ENCODE measurements at regions of chr12 and their contacts with region 1.

Region 1: DNA sequence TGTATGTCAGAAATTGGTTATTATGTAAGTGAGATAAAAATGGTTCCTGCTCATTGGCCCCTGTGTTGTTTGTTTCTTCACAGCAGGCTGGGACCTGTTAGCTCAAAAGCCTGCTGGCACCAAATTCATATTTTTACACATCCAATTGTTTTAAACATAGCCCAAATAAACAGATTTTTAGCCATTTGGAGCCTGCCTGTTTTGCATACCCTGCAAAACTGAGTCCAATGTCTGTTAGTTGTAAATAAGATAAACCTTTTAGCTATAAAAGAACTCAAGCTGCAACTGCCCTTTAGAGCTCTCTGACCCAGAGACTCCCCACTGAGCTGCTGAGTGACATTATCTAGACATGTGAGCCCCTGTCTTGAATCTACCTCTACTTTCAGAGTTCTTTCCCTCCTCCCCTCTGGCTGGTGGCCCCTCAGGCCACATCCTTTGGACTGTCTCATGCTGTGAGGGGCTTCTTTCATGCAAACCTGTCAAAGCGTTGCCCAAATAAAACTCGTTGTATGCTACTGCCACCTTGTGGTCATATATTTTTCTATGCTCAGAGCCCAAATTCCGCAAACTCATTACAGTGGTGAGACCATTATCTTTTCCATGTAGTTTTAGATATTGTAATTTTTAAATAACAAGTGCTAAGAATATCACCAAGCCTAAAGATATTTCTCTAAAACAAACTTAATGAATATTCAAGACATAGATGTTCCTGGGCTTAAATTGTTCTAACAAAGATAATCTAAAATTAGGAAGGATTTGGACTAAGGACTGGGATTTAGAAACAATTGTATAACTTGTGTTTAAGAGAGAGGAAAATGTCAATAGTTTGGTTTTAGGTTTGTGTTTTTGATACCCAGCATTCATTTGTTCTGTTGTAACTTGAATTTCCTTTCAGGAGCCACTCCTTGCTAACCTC is 337.9 kb downstream of the AACS start:
- DNase-seq: no peak
- H3K4me3 ChIP-seq: no peak overlapping the region
- H3K27ac ChIP-seq: no peak overlapping the region
- H3K4me1 ChIP-seq: no peaks in the 10 kb centered on the region
- H3K27me3 ChIP-seq: peaks cover 0 to 40% (median 0%) of the 10 kb centered on the region in 7 donors
- CTCF ChIP-seq: peak in 9 of 11 experiments; percentile 8 to 54 (median 46)
- POLR2A ChIP-seq: no peak

Region 2: DNA sequence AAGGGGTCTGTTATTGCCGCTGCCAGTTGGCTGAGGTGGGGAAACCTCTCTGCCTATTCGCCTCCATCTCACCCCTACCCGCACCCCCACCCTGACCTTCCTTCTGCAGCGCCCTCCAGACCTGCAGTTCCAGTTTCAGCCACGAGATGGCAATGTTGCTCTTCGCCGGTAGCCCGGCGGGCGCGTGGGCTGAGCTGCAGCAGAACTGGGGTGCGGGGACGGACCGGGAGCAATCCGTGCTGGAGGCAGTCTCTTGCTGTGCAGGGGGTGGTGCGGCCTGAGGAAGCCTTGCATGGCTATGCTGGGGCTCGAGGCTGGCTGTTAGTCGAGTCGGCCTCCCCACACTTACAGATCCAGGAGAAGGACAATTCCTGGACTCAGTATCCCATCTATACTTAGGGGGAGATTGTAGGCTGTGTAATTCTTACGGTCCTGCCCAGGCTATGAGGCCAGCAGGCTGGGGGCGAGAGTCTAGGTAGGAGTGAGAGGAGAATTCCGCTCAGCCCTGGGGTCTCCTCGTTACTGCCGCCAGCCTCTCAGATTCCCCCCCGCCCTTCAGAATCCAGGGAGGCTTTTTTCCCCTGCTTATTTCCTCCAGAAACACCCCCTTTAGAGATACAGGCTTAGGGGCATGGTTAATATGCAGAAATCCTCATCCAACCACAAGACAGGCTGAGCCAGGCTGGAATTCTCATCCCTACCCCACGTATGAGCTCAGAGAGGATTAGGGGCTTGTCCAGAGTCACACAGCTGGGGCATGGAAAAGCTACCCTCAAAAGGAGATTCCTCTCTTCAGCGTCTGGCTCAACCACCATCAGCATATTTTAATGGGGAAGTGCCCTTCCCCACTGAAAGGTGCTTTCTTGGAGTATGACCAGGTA is 219.7 kb before region 1 on chr12:
- intact Hi-C with region 1: loop called (anchors 10 kb)
- DNase-seq: peak; percentile 92
- H3K4me3 ChIP-seq: peak overlapping the region in 1 of 8 donors; percentile 36
- H3K27ac ChIP-seq: no peak overlapping the region
- H3K4me1 ChIP-seq: peaks cover 13 to 38% (median 27%) of the 10 kb centered on the region in 6 donors
- H3K27me3 ChIP-seq: peaks cover 3 to 95% (median 47%) of the 10 kb centered on the region in 7 donors
- CTCF ChIP-seq: peak; percentile 96 to 99 (median 98)
- POLR2A ChIP-seq: no peak

Region 3: DNA sequence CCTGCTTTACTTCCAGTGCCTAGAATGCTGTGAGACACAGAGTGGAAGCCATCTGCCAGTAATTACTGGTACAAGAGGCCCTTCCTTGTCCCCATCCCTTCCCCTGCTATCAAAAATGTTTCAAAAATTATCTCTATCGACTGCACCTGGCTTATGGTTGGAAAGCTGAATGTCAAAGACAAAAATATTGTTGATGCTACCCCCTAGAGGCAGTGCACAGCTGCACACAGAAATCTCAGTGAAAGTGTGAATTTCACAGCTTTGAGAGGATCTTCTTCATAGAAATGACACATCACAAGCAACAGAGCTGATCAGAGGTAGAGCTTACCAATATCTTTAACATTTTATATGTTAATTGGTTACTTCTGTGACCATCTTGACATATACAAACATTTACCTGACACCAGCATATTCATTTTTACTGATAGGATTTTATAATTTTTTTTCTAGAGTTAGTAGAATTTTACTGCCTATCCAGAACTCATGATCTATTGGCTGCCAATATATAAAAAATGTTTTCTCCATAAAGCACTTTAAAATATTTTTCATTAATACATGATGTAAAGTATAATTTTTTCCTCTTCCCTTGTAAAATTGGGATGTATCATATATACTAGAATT is 199.9 kb before region 1 on chr12:
- intact Hi-C with region 1: no loop called
- DNase-seq: no peak
- H3K4me3 ChIP-seq: no peak overlapping the region
- H3K27ac ChIP-seq: no peak overlapping the region
- H3K4me1 ChIP-seq: no peaks in the 10 kb centered on the region
- H3K27me3 ChIP-seq: peaks cover 0 to 64% (median 0%) of the 10 kb centered on the region in 7 donors
- CTCF ChIP-seq: peak in 7 of 11 experiments; percentile 18 to 47 (median 33)
- POLR2A ChIP-seq: no peak

Measured in spleen (tissue), 13 donors.